IMR-90 (cell line): ENCODE measurements at regions of chr11 and their contacts with region 1.

Region 1: DNA sequence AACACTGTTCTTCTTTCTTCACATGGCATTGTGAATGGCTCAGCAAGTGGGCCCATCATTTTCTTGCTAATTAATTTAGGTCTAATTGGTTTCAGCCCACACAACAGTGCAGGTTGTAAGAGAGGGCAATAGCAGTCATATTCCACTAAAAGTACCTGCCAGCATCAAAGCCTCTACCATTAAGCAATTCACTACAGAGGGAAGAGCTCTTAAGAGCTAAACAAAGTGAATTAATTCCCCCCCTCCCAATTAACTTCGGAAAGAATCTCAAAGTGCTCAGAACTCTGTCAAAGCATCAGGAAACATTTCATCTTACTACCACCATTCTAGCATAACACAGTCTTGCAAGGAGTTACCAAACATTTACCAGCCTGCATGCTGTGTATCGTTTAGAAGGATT is 133.9 kb upstream of the UBASH3B start:
- DNase-seq: no peak
- ATAC-seq: no peak
- H3K4me3 ChIP-seq: no peak overlapping the region
- H3K27ac ChIP-seq: no peak overlapping the region
- H3K4me1 ChIP-seq: peaks cover 3% of the 10 kb centered on the region; the same call in 1 of the 2 replicates
- H3K27me3 ChIP-seq: peaks cover 11% of the 10 kb centered on the region
- CTCF ChIP-seq: no peak
- POLR2A ChIP-seq: no peak
- RAD21 ChIP-seq: no peak

Region 2: DNA sequence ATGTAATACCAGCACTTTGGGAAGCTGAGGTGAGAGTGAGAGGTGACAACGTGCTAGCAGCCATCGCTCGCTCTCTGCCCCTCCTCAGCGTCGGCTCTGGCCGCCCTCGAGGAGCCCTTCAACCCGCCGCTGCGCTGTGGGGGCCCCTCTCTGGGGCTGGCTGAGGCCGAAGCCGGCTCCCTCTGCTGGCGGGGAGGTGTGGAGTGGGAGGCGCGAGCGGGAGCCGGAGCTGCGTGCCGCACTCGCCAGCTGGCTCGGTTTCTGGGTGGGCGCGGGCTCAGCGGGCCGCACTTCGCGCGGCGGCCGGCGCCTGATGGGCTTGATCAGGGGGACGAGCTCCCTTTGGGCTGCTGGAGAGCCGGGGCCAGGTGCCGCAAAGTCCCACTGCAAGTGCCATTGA is 35.0 kb after region 1 on chr11:
- CTCF ChIA-PET with region 1: no interaction called
- POLR2A ChIA-PET with region 1: no interaction called
- dilution Hi-C with region 1: no loop called
- in situ Hi-C with region 1: no loop called
- intact Hi-C with region 1: loop called (anchors 1 kb)
- DNase-seq: no peak
- ATAC-seq: peak; percentile 93
- H3K4me3 ChIP-seq: peak overlapping the region; percentile 39
- H3K27ac ChIP-seq: no peak overlapping the region
- H3K4me1 ChIP-seq: no peaks in the 10 kb centered on the region
- H3K27me3 ChIP-seq: peaks cover 14% of the 10 kb centered on the region
- CTCF ChIP-seq: peak; percentile 18; the same call in 1 of the 2 replicates
- POLR2A ChIP-seq: no peak
- RAD21 ChIP-seq: no peak

Region 3: DNA sequence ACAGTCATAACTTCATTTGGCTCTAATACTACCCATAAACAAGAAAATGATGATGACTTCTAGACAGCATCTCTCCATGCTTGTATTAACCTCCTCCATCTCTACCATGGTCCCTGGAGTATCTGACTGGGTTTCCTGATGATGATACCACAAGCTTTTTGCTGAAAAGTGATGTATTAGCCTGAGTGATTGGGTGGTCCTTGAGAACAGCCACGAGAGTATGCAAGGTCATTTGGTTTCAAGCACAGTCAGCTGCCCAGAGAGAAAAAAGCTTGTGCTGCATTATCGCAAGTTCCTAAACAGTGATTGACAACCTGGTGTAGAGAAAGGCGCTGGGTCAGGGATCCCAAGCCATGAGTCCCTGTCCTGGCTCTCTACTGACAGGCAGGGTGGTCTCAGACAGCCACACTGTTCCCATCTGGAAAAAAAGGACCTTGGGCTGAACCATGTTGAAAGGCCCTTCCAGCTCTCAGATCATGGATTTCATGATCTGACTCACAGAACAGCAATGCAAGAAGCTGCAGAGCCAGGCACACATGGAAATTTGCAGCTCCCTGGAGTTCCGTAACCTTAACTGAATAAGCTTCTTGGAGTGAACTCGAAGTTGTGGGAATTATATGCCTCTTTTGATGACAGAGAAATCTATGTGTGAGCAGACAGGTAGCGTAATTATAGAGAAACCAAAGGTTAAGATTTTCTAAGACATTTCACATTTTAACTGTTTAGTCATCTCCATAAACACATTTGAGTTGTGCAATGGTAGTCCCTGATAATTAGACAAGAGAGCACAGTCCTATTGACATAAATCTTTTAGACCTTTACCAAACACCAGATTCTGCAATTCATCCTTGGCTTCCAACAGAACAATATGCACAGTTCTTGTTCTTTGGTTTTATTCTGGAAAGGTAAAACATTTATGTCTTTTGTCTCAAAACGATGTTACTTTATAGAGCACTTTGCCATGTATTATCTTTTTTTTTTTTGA is 79.8 kb after region 1 on chr11:
- CTCF ChIA-PET with region 1: no interaction called
- POLR2A ChIA-PET with region 1: no interaction called
- dilution Hi-C with region 1: no loop called
- in situ Hi-C with region 1: no loop called
- intact Hi-C with region 1: no loop called
- DNase-seq: peak; percentile 69
- ATAC-seq: peak; percentile 93
- H3K4me3 ChIP-seq: no peak overlapping the region
- H3K27ac ChIP-seq: no peak overlapping the region
- H3K4me1 ChIP-seq: peaks cover 2% of the 10 kb centered on the region; the same call in 1 of the 2 replicates
- H3K27me3 ChIP-seq: peaks cover 13% of the 10 kb centered on the region
- CTCF ChIP-seq: no peak
- POLR2A ChIP-seq: no peak
- RAD21 ChIP-seq: no peak

Region 4: GRCh38 chr11:122681735-122682134 is 160.1 kb after region 1 on chr11:
- CTCF ChIA-PET with region 1: no interaction called
- POLR2A ChIA-PET with region 1: no interaction called
- dilution Hi-C with region 1: no loop called
- in situ Hi-C with region 1: no loop called
- intact Hi-C with region 1: no loop called
- DNase-seq: no peak
- ATAC-seq: peak; percentile 39
- H3K4me3 ChIP-seq: no peak overlapping the region
- H3K27ac ChIP-seq: no peak overlapping the region
- H3K4me1 ChIP-seq: peaks cover 8% of the 10 kb centered on the region
- H3K27me3 ChIP-seq: no peaks in the 10 kb centered on the region
- CTCF ChIP-seq: no peak
- POLR2A ChIP-seq: no peak
- RAD21 ChIP-seq: no peak